Psoas muscle (tissue), 8 donors: ENCODE measurements at regions of chr3 and their contacts with region 1.

Region 1: GRCh38 chr3:11445883-11446282 is 173.7 kb downstream of the ATG7 start:
- DNase-seq: no peak
- ATAC-seq: no peak
- H3K4me3 ChIP-seq: no peak overlapping the region
- H3K27ac ChIP-seq: no peak overlapping the region
- H3K4me1 ChIP-seq: no peaks in the 10 kb centered on the region
- H3K27me3 ChIP-seq: no peaks in the 10 kb centered on the region
- CTCF ChIP-seq: no peak

Region 2: DNA sequence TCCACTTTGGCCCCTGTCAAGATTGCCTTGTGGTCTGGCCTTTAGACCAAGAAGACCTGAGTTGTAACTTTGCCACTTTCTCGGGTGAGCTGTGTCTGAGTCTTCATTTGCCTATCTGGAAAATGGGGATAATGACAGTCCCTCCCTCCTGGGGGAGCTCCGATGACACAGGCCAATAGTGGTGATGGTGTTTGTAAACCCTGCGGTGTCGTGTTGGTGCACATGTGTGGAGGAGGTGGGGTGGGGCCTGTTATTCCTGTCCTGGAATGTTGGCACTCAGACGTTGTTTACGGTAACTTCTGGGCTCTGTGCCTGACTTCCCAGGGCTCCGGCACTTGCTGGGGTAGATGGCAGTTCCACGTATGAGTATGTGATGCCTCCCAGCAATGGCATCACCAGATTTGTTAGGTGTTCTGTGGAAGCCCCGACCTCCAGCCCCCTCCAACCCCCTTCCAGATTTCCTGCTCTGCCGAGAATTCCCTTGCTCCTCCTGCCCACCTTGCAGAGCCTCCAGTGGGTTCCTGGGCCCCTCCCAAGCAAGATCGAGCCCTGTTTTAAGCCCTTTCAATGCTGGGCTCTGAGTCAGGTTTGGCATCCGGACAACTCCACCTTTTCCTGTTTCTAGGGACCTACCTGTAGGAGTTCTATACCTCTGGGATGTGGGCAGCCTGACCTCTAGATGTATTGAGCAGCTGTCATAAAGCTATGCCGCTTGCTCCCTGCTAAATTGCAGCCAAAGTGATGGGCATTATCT is 260.1 kb before region 1 on chr3:
- intact Hi-C with region 1: no loop called
- DNase-seq: peak; percentile 79
- ATAC-seq: peak; percentile 95 to 98 (median 98)
- H3K4me3 ChIP-seq: no peak overlapping the region
- H3K27ac ChIP-seq: peak overlapping the region; percentile 32
- H3K4me1 ChIP-seq: peaks cover 20% of the 10 kb centered on the region
- H3K27me3 ChIP-seq: no peaks in the 10 kb centered on the region
- CTCF ChIP-seq: no peak

Region 3: DNA sequence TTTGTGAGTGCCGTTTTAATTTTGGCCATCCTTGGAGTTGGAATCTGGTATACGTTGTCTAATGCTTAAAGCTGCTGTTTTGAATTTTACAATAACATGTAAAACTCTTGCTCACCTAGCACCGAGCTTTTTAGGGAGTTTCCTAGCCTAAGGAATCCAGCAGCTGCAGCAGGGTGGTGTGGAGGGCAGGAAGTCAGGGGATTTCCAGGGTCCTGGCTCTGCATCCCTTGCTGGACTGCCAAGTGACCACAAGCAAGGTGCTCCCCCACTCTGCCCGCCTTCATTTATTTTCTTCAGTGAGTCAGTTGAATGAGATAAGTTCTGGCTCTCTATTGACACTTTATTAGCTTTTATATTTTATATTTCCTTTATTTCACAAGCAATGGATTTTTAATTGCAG is 60.0 kb before region 1 on chr3:
- intact Hi-C with region 1: loop called in 1 of 2 experiments (anchors 5 kb)
- DNase-seq: no peak
- ATAC-seq: no peak
- H3K4me3 ChIP-seq: no peak overlapping the region
- H3K27ac ChIP-seq: no peak overlapping the region
- H3K4me1 ChIP-seq: peaks cover 36% of the 10 kb centered on the region
- H3K27me3 ChIP-seq: no peaks in the 10 kb centered on the region
- CTCF ChIP-seq: no peak